GM12878 (cell line): ENCODE measurements at regions of chr1 and their contacts with region 1.

Region 1: DNA sequence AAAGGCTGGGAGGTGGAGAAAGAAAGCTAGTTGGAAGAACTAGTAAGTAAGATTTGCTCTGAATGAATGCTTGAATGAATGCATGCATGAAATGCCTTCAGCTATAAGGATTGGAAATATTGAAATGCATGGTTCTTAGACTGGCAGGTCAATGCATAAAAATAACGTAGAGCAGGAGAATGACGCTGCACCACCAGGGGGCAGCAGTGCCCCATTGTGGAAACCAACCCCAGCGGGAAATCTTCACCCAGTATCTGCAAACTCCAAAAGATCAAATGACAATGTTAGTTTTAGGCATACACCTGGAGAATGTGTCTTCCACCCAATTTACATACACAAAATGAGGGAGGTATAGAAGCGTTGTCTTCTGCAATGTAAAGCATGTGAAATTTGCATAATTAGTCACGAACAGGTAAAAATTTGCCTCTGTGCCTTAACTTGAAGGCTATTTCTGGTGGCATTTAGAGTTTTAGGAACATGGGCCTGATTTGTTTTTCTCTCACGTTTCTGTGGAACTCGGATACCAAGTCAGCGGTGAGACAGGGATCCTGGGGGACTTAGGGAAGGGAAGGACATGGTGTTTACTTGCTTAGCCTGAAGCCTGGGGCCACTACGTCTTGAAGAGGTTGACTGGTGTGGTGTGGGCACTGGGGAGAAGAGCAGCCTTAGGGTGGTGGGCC is 78.6 kb downstream of the HHAT start:
- DNase-seq: no peak
- ATAC-seq: peak; percentile 89
- H3K4me3 ChIP-seq: no peak overlapping the region
- H3K27ac ChIP-seq: no peak overlapping the region
- H3K4me1 ChIP-seq: no peaks in the 10 kb centered on the region
- H3K27me3 ChIP-seq: no peaks in the 10 kb centered on the region
- CTCF ChIP-seq: peak; percentile 87 to 98 (median 93); a peak in 5 of 6 replicates
- EP300 ChIP-seq: no peak
- POLR2A ChIP-seq: no peak
- RAD21 ChIP-seq: peak; percentile 72

Region 2: DNA sequence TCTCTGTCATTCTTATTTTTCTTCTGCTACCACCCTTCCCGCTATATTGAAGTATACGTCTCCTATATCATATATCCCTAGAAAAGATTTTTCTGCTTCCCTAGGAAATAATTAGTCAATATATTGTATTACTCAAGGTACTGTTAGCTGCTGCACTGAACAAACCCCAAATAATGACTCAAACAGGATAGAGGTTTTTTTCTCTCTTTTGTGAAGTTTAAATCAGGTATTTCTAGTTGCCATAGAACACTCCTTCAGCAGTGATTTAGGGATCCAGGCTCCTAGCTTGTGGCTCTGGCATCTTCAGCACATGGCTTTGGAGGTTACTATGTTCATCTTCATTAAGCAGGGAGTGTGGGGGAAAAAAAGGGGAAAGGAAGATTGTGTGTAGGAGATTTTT is 451.2 kb before region 1 on chr1:
- CTCF ChIA-PET with region 1: no interaction called
- POLR2A ChIA-PET with region 1: no interaction called
- RAD21 ChIA-PET with region 1: no interaction called
- SMC1A ChIA-PET with region 1: no interaction called
- in situ Hi-C with region 1: no loop called
- intact Hi-C with region 1: no loop called
- DNase-seq: no peak
- ATAC-seq: no peak
- H3K4me3 ChIP-seq: no peak overlapping the region
- H3K27ac ChIP-seq: no peak overlapping the region
- H3K4me1 ChIP-seq: no peaks in the 10 kb centered on the region
- H3K27me3 ChIP-seq: no peaks in the 10 kb centered on the region
- CTCF ChIP-seq: no peak
- EP300 ChIP-seq: no peak
- POLR2A ChIP-seq: no peak
- RAD21 ChIP-seq: no peak

Region 3: DNA sequence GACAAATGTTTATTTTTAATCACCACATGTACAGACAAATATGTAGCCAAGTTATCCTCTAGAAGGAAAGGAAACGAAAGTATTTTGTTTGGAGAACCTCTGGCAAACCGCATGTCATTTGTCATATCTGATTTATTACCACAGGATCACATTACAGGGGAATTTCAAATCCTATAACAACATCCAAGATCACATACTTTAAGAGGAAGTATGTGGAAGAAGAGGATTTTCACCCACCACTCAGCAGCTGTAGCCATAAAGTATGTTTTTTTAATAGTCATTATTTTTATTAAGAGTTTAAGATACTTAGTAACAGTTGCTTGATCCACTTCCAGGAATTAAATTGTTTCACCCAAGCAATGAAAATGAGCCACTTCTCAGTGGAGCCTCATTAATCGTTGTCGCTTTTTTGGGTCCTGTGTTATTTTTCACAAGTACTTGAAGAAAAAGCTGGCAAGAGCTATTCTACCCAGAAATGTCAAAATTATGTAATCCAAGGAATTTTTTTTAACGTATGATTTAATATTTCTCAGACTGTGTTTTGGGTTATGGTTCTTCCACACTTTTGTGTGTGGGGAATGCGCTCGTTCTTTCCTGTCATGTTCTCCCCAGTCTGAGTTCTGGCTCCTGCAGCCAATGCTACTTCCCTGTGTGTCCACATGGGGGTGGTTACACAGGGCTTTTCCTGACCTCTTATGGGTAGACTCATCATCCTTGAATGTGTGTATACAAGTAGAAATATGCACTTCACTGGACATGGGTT is 167.8 kb before region 1 on chr1:
- CTCF ChIA-PET with region 1: no interaction called
- POLR2A ChIA-PET with region 1: no interaction called
- RAD21 ChIA-PET with region 1: no interaction called
- SMC1A ChIA-PET with region 1: no interaction called
- in situ Hi-C with region 1: no loop called
- intact Hi-C with region 1: no loop called
- DNase-seq: no peak
- ATAC-seq: 0 out of 3 replicates have a peak, but pooled peaks have one; percentile 27
- H3K4me3 ChIP-seq: no peak overlapping the region
- H3K27ac ChIP-seq: no peak overlapping the region
- H3K4me1 ChIP-seq: no peaks in the 10 kb centered on the region
- H3K27me3 ChIP-seq: peaks cover 0 to 2% of the 10 kb centered on the region in 2 experiments; a peak in 2 of 4 replicates
- CTCF ChIP-seq: peak in 2 of 3 experiments; percentile 10 to 12; a peak in 1 of 6 replicates
- EP300 ChIP-seq: no peak
- POLR2A ChIP-seq: no peak
- RAD21 ChIP-seq: no peak

Region 4: GRCh38 chr1:210311726-210312493 is 95.4 kb before region 1 on chr1:
- CTCF ChIA-PET with region 1: interaction called, 12 read pairs
- POLR2A ChIA-PET with region 1: no interaction called
- RAD21 ChIA-PET with region 1: interaction called, 23 read pairs
- SMC1A ChIA-PET with region 1: interaction called, 9 read pairs
- in situ Hi-C with region 1: no loop called
- intact Hi-C with region 1: loop called (anchors 5 kb)
- DNase-seq: no peak
- ATAC-seq: no peak; the same call in 1 of the 3 replicates
- H3K4me3 ChIP-seq: no peak overlapping the region
- H3K27ac ChIP-seq: no peak overlapping the region
- H3K4me1 ChIP-seq: no peaks in the 10 kb centered on the region
- H3K27me3 ChIP-seq: peaks cover 0 to 2% of the 10 kb centered on the region in 2 experiments; a peak in 3 of 4 replicates
- CTCF ChIP-seq: no peak
- EP300 ChIP-seq: no peak
- POLR2A ChIP-seq: no peak
- RAD21 ChIP-seq: no peak

Region 5: DNA sequence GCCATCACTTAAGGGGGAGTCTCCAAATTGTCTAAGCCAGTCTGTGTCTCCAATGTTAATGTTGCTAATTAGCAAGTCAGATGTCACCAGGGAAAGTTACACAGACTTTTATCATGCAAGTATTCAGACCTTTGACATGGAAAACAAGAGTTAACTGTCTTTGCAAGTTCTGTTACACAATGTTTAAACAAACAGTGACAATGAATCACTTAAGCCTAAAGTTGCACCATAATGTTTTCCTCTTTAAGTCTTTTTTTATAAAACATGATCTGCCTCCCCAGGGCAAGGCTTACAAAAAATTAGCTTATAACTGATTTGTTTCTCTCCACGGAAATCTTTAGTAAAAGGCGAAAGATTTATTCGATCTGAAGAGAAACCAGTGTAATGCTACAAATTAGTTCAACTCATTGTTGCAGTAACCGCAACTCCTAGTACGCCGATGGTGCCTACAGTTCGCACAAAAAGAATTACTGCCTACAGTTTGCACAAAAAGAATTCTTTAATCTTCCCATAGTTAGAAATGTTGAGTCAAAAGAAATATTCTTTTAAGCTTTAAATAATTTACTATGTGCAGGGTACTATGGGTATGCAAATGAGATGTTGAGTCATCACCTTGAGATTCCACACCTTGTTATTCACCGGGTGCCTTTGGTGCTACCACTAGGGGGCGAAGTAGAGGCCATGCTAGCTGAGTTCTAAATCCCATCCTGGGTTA is 33.3 kb before region 1 on chr1:
- CTCF ChIA-PET with region 1: interaction called, 379 read pairs
- POLR2A ChIA-PET with region 1: interaction called, 224 read pairs
- RAD21 ChIA-PET with region 1: interaction called, 415 read pairs
- SMC1A ChIA-PET with region 1: interaction called, 683 read pairs
- in situ Hi-C with region 1: no loop called
- intact Hi-C with region 1: no loop called
- DNase-seq: peak; percentile 81
- ATAC-seq: peak; percentile 84
- H3K4me3 ChIP-seq: no peak overlapping the region
- H3K27ac ChIP-seq: peak overlapping the region; percentile 40; the same call in 1 of the 2 replicates
- H3K4me1 ChIP-seq: no peaks in the 10 kb centered on the region
- H3K27me3 ChIP-seq: no peaks in the 10 kb centered on the region
- CTCF ChIP-seq: peak; percentile 81 to 90 (median 87)
- EP300 ChIP-seq: no peak
- POLR2A ChIP-seq: peak; percentile 82
- RAD21 ChIP-seq: peak; percentile 38

Region 6: GRCh38 chr1:210418863-210419650 is 11.7 kb after region 1 on chr1:
- CTCF ChIA-PET with region 1: interaction called, 8 read pairs
- POLR2A ChIA-PET with region 1: no interaction called
- RAD21 ChIA-PET with region 1: interaction called, 6 read pairs
- SMC1A ChIA-PET with region 1: interaction called, 19 read pairs
- in situ Hi-C with region 1: no loop called
- intact Hi-C with region 1: no loop called
- DNase-seq: no peak
- ATAC-seq: no peak
- H3K4me3 ChIP-seq: no peak overlapping the region
- H3K27ac ChIP-seq: no peak overlapping the region
- H3K4me1 ChIP-seq: no peaks in the 10 kb centered on the region
- H3K27me3 ChIP-seq: no peaks in the 10 kb centered on the region
- CTCF ChIP-seq: no peak
- EP300 ChIP-seq: no peak
- POLR2A ChIP-seq: no peak
- RAD21 ChIP-seq: no peak

Region 7: DNA sequence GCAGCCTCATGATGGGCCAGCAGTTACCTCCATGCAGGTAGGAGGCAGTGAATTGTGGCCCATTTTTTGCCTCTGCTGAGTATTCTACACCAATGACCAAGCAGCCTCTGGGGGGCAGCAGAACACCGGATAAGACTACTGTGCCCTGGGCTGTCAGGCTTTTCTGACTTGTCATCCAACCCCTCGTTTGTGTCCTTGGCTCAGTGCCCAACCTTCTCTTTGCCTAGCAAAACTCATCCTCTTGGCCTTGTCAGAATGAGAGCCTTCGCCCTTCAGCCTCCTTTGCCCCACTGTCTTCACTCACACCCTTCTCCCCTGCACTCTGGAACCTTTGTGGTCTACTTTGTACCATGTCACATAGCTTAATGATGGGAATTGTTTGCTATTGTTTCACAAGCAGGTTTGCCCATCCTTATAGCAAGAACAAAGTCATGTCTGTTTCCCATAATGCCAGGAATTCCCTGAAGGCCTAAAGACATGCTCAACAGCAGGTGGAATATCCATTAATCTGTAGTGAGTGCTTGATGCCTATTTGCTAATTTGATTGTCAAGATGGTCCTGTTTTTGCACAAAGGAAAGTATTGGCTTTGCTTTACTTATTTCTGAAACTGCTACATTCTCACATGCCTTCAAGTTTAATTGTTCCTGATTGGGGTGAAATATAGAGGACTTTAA is 177.2 kb after region 1 on chr1:
- CTCF ChIA-PET with region 1: interaction called, 16 read pairs
- POLR2A ChIA-PET with region 1: no interaction called
- RAD21 ChIA-PET with region 1: interaction called, 9 read pairs
- SMC1A ChIA-PET with region 1: interaction called, 7 read pairs
- in situ Hi-C with region 1: no loop called
- intact Hi-C with region 1: loop called (anchors 5 kb)
- DNase-seq: peak; percentile 13
- ATAC-seq: peak; percentile 97
- H3K4me3 ChIP-seq: no peak overlapping the region
- H3K27ac ChIP-seq: no peak overlapping the region
- H3K4me1 ChIP-seq: no peaks in the 10 kb centered on the region
- H3K27me3 ChIP-seq: no peaks in the 10 kb centered on the region
- CTCF ChIP-seq: peak; percentile 74 to 78 (median 75)
- EP300 ChIP-seq: no peak
- POLR2A ChIP-seq: no peak
- RAD21 ChIP-seq: peak; percentile 94

Region 8: GRCh38 chr1:211133836-211134669 is 726.7 kb after region 1 on chr1 and contains the start of gene KCNH1:
- CTCF ChIA-PET with region 1: interaction called, 45 read pairs
- POLR2A ChIA-PET with region 1: no interaction called
- RAD21 ChIA-PET with region 1: interaction called, 48 read pairs
- SMC1A ChIA-PET with region 1: interaction called, 8 read pairs
- in situ Hi-C with region 1: loop called (anchors 5 kb)
- intact Hi-C with region 1: loop called (anchors 1 kb)
- DNase-seq: peak; percentile 7
- ATAC-seq: peak; percentile 97
- H3K4me3 ChIP-seq: no peak within 1 kb of the TSS
- H3K27ac ChIP-seq: no peak within 1 kb of the TSS
- H3K4me1 ChIP-seq: no peaks in the 10 kb centered on the region
- H3K27me3 ChIP-seq: peaks cover 0 to 4% of the 10 kb centered on the region in 2 experiments; a peak in 2 of 4 replicates
- CTCF ChIP-seq: peak; percentile 69 to 83 (median 81)
- EP300 ChIP-seq: no peak
- POLR2A ChIP-seq: no peak
- RAD21 ChIP-seq: peak; percentile 63
- polyA plus RNA-seq, gene KCNH1: 0.02 TPM in 1 of 2 experiments, not detected in the other